Caco-2 (cell line): ENCODE measurements at regions of chr6 and their contacts with region 1.

Region 1: DNA sequence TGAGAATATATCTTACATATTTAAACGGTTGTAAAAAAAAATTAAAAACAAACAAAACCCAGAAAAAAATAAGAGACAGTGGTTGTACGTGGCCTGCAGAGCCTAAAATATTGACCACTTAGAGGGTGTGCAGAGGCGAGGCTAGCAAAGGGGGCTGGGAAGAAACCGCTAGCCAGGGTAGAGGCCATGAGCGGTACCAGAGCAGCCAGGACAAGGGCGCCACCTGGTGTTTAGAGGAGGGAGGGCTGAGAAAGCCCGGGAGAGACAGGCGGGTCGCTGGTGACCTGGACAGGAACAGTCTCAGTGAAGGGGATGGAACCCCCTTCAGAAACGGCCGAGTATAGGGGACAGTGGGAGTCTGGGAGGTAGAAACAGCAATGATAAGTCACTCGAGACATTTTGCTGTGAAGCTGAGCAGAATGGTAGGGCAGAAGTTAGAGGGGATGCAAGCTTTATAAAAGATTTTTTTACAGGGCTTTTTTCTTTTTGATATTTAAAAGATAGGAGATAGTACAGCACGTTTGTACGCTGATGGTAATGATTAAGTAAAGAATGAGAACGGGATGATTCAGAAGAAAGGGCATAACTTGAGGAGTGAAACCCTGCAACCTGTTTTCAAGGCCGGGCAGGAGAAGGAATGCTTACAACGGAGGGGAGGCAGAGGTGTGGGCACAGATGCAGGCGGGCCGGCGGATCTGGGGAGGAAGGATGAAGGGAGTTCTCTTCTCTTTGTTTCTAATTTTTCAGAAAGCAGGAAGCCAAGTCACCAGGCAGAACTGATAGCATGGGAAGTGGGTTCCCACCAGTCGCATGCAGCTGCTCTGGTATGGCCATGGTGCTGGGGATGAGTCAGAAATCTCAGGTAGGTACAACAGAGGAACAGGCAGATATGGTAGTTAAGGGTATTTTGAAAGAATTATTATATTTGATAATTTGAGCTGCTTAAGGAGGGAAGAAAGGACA is 76.2 kb downstream of the FAM229B start:
- DNase-seq: peak; percentile 68 to 80
- H3K4me3 ChIP-seq: no peak overlapping the region
- H3K4me3 Mint-ChIP-seq: no peak overlapping the region
- H3K27ac Mint-ChIP-seq: no peak overlapping the region
- H3K4me1 ChIP-seq: no peaks in the 10 kb centered on the region
- H3K4me1 Mint-ChIP-seq: no peaks in the 10 kb centered on the region
- H3K27me3 ChIP-seq: no peaks in the 10 kb centered on the region
- H3K27me3 Mint-ChIP-seq: peaks cover 31% of the 10 kb centered on the region
- CTCF ChIP-seq: peak; percentile 82 to 94

Region 2: GRCh38 chr6:112087136-112087911 is 76.3 kb before region 1 on chr6 and contains the starts of genes FAM229B and TUBE1:
- CTCF ChIA-PET with region 1: interaction called, 16 read pairs
- POLR2A ChIA-PET with region 1: interaction called, 3 read pairs
- intact Hi-C with region 1: loop called (anchors 1 kb)
- DNase-seq: peak; percentile 88 to 93
- H3K4me3 ChIP-seq: peak within 1 kb of the TSS; percentile 77
- H3K4me3 Mint-ChIP-seq: no peak within 1 kb of the TSS
- H3K27ac Mint-ChIP-seq: no peak within 1 kb of the TSS
- H3K4me1 ChIP-seq: peaks cover 3% of the 10 kb centered on the region; the same call in 1 of the 2 replicates
- H3K4me1 Mint-ChIP-seq: peaks cover 6% of the 10 kb centered on the region
- H3K27me3 ChIP-seq: no peaks in the 10 kb centered on the region; the same call in 1 of the 2 replicates
- H3K27me3 Mint-ChIP-seq: peaks cover 10% of the 10 kb centered on the region
- CTCF ChIP-seq: peak in 1 of 2 experiments; percentile 21
- total RNA-seq, gene FAM229B: 1.9 and 2.0 TPM in 2 replicates
- total RNA-seq, gene TUBE1: 26.3 and 30.8 TPM in 2 replicates

Region 3: GRCh38 chr6:112199001-112199403 is 35.4 kb after region 1 on chr6:
- CTCF ChIA-PET with region 1: no interaction called
- POLR2A ChIA-PET with region 1: no interaction called
- intact Hi-C with region 1: no loop called
- DNase-seq: no peak
- H3K4me3 ChIP-seq: no peak overlapping the region
- H3K4me3 Mint-ChIP-seq: no peak overlapping the region
- H3K27ac Mint-ChIP-seq: no peak overlapping the region
- H3K4me1 ChIP-seq: peaks cover 9% of the 10 kb centered on the region
- H3K4me1 Mint-ChIP-seq: no peaks in the 10 kb centered on the region
- H3K27me3 ChIP-seq: no peaks in the 10 kb centered on the region
- H3K27me3 Mint-ChIP-seq: no peaks in the 10 kb centered on the region
- CTCF ChIP-seq: no peak

Region 4: DNA sequence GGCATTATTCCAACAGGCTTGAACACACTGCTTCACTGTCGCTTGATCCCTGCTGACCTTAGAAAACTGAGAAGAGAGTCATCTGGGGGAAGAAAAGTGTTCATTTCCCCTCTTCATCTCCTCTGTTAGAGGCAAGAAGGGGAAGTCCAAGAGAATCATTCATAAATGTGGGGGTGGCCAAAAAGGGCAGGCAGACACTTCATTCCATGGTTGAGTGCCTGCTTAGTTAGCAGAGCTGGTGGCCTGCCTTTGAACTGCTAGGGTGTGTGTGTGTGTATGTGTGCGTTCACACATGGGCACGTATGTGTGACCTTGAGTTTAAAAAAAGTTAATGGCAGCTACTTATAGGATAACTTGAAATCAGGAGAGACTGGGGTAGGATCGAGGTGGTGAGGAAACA is 144.1 kb after region 1 on chr6:
- CTCF ChIA-PET with region 1: no interaction called
- POLR2A ChIA-PET with region 1: no interaction called
- intact Hi-C with region 1: no loop called
- DNase-seq: no peak
- H3K4me3 ChIP-seq: no peak overlapping the region
- H3K4me3 Mint-ChIP-seq: no peak overlapping the region
- H3K27ac Mint-ChIP-seq: no peak overlapping the region
- H3K4me1 ChIP-seq: no peaks in the 10 kb centered on the region
- H3K4me1 Mint-ChIP-seq: no peaks in the 10 kb centered on the region
- H3K27me3 ChIP-seq: no peaks in the 10 kb centered on the region
- H3K27me3 Mint-ChIP-seq: peaks cover 11% of the 10 kb centered on the region
- CTCF ChIP-seq: no peak